ENCODE measurements at regions of chr16 and their contacts with region 1.

Region 1: GRCh38 chr16:58121132-58121531 is 8.0 kb downstream of the CFAP20 start:
- DNase-seq: no peak
- H3K4me3 ChIP-seq: no peak overlapping the region
- H3K27ac ChIP-seq: no peak overlapping the region
- H3K27me3 ChIP-seq: no peaks in the 10 kb centered on the region
- CTCF ChIP-seq: no peak

Region 2: GRCh38 chr16:57899771-57900661 is 221.1 kb before region 1 on chr16:
- CTCF ChIA-PET with region 1: interaction called, 26 read pairs
- POLR2A ChIA-PET with region 1: no interaction called
- DNase-seq: peak; percentile 33
- H3K4me3 ChIP-seq: no peak overlapping the region
- H3K27ac ChIP-seq: no peak overlapping the region
- H3K27me3 ChIP-seq: peaks cover 17% of the 10 kb centered on the region
- CTCF ChIP-seq: peak; percentile 90

Region 3: DNA sequence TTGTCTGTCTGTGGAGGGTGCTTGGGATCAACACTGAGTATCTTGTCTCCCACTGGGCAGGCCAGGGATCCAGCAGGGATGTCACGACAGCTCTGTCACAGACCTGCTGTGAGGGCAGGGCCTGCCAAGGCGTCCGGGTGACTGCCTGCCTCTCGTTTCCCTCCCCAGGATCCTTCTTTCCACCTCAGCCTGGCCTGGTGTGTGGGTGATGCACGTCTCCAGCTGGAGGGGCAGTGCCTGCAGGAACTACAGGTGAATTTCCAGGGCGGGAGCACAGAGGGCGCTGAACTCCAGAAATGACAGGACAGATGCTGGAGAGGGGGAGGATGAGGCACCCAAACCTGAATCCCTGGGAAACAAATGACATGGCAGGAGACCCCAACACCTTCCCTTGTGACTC is 102.3 kb before region 1 on chr16:
- CTCF ChIA-PET with region 1: interaction called, 29 read pairs
- POLR2A ChIA-PET with region 1: no interaction called
- DNase-seq: no peak
- H3K4me3 ChIP-seq: no peak overlapping the region
- H3K27ac ChIP-seq: no peak overlapping the region
- H3K27me3 ChIP-seq: peaks cover 2% of the 10 kb centered on the region
- CTCF ChIP-seq: no peak

Region 4: DNA sequence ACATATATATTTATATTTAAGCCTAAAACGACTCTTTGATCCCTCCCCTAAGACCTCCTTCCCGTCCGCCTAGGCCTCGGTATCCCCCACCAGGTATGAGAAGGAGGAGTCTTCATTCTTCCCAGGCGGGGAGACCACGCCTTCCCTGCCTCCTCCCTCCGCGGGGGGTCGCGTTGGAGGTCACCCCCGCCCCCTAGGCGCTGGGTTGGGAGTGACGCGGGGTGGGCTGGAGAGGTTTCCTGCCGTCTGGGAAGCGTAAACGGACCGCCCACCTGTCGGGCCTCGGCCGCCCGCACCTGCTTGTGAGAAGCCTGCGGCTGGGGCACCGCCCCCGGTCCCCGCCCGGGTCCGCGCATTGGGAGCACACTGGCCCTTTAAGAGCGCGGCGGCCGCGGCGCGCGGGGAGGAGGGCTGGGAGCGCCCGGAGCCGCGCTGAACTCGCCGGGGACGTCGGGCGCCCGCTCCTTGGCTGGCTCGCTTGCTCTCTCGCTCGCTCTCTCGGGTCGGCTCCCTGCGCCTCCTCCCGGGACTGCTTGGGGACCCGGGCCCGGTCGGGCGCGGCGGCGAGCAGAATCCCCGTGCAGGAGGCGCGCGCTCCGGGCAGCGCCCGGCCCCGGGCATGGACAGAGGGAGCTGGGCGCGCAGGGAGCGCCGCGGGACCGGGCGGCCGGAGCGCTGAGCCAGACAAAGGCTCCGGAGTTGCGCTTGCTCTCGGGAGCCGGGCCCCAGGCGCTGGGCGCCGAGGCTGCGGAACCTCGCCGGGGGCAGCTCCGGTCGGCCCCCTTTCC is 95.6 kb before region 1 on chr16 and contains the start of gene MMP15:
- CTCF ChIA-PET with region 1: interaction called, 29 read pairs
- POLR2A ChIA-PET with region 1: interaction called, 3 read pairs
- DNase-seq: no peak
- H3K4me3 ChIP-seq: peak within 1 kb of the TSS; percentile 59
- H3K27ac ChIP-seq: no peak within 1 kb of the TSS
- H3K27me3 ChIP-seq: peaks cover 42% of the 10 kb centered on the region
- CTCF ChIP-seq: no peak
- polyA plus RNA-seq, gene MMP15: 0.60 and 0.88 TPM in 2 replicates

Region 5: GRCh38 chr16:58110571-58111301 is 10.4 kb before region 1 on chr16:
- CTCF ChIA-PET with region 1: interaction called, 10 read pairs
- POLR2A ChIA-PET with region 1: no interaction called
- DNase-seq: no peak
- H3K4me3 ChIP-seq: no peak overlapping the region
- H3K27ac ChIP-seq: no peak overlapping the region
- H3K27me3 ChIP-seq: peaks cover 1% of the 10 kb centered on the region
- CTCF ChIP-seq: no peak

Measured in AG04450 (cell line).